Caco-2 (cell line): ENCODE measurements at regions of chrX and their contacts with region 1.

Region 1: DNA sequence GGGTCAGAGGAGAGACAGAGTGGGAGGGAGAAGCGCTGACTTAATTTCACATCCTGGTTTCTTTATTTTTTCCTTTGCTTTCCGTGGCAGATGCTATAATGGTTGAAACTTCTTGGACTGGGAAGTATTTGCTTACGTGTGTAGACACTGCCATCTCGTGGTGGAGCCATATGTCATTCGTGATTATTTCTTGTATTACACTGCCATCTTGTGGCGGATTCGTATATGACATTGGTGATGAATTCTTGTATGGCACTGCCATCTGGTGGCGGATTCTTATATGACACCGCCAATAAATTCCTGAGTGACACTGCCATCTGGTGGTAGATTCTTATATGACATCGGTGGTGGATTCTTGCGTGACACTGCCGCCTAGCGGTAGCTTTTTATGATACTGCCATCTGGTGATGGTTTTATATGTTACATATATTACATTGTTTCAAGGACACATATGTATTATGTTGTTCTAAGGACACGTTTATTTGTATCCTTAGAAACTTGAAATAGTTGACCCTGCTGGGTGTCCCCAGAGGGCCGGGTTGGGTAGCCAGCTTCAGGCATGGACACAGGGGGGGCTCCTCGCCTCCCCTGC is 37.3 kb upstream of the CLCN4 start:
- DNase-seq: peak; percentile 52 to 60
- H3K4me3 ChIP-seq: no peak overlapping the region
- H3K4me3 Mint-ChIP-seq: no peak overlapping the region
- H3K27ac Mint-ChIP-seq: no peak overlapping the region
- H3K4me1 ChIP-seq: no peaks in the 10 kb centered on the region
- H3K4me1 Mint-ChIP-seq: no peaks in the 10 kb centered on the region
- H3K27me3 ChIP-seq: no peaks in the 10 kb centered on the region
- H3K27me3 Mint-ChIP-seq: no peaks in the 10 kb centered on the region
- CTCF ChIP-seq: peak; percentile 92 to 99

Region 2: GRCh38 chrX:9988762-9989161 is 130.7 kb before region 1 on chrX:
- CTCF ChIA-PET with region 1: interaction called, 3 read pairs
- POLR2A ChIA-PET with region 1: no interaction called
- intact Hi-C with region 1: loop called (anchors 1 kb)
- DNase-seq: peak in 1 of 2 experiments; percentile 22
- H3K4me3 ChIP-seq: no peak overlapping the region
- H3K4me3 Mint-ChIP-seq: no peak overlapping the region
- H3K27ac Mint-ChIP-seq: no peak overlapping the region
- H3K4me1 ChIP-seq: no peaks in the 10 kb centered on the region
- H3K4me1 Mint-ChIP-seq: no peaks in the 10 kb centered on the region
- H3K27me3 ChIP-seq: no peaks in the 10 kb centered on the region
- H3K27me3 Mint-ChIP-seq: no peaks in the 10 kb centered on the region
- CTCF ChIP-seq: peak; percentile 23 to 55

Region 3: GRCh38 chrX:9995855-9996339 is 123.6 kb before region 1 on chrX:
- CTCF ChIA-PET with region 1: interaction called, 3 read pairs
- POLR2A ChIA-PET with region 1: no interaction called
- intact Hi-C with region 1: loop called (anchors 1 kb)
- DNase-seq: peak; percentile 74 to 82
- H3K4me3 ChIP-seq: no peak overlapping the region
- H3K4me3 Mint-ChIP-seq: no peak overlapping the region
- H3K27ac Mint-ChIP-seq: no peak overlapping the region
- H3K4me1 ChIP-seq: peaks cover 7% of the 10 kb centered on the region; the same call in 1 of the 2 replicates
- H3K4me1 Mint-ChIP-seq: peaks cover 7% of the 10 kb centered on the region
- H3K27me3 ChIP-seq: no peaks in the 10 kb centered on the region
- H3K27me3 Mint-ChIP-seq: no peaks in the 10 kb centered on the region
- CTCF ChIP-seq: peak; percentile 85 to 87

Region 4: GRCh38 chrX:10014462-10015356 is 104.8 kb before region 1 on chrX:
- CTCF ChIA-PET with region 1: no interaction called
- POLR2A ChIA-PET with region 1: no interaction called
- intact Hi-C with region 1: loop called (anchors 1 kb)
- DNase-seq: peak; percentile 91 to 92
- H3K4me3 ChIP-seq: peak overlapping the region; percentile 58
- H3K4me3 Mint-ChIP-seq: peak overlapping the region; percentile 73
- H3K27ac Mint-ChIP-seq: peak overlapping the region; percentile 65
- H3K4me1 ChIP-seq: peaks cover 10% of the 10 kb centered on the region; the same call in 1 of the 2 replicates
- H3K4me1 Mint-ChIP-seq: peaks cover 30% of the 10 kb centered on the region
- H3K27me3 ChIP-seq: no peaks in the 10 kb centered on the region
- H3K27me3 Mint-ChIP-seq: no peaks in the 10 kb centered on the region
- CTCF ChIP-seq: no peak

Region 5: DNA sequence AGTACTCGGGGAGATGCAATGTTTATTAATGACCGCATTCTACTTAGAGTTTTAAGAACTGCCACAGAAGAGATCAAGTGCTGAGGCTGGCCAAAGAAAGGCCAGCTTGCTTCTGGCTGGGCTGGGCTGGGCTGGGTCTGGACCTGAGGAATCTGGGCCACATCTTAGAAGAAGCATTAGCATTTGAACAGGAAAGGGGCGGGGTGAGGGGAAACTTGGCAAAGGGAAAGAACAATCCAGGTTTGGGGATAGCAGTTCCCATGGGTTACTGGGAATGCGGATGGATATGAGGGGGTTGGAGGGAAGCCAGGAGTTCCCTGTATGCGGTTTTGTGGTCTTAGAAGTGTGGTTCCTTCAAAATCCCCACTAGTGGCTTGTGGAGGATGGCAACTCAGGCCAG is 69.0 kb before region 1 on chrX:
- CTCF ChIA-PET with region 1: no interaction called
- POLR2A ChIA-PET with region 1: no interaction called
- intact Hi-C with region 1: no loop called
- DNase-seq: no peak
- H3K4me3 ChIP-seq: no peak overlapping the region
- H3K4me3 Mint-ChIP-seq: no peak overlapping the region
- H3K27ac Mint-ChIP-seq: no peak overlapping the region
- H3K4me1 ChIP-seq: no peaks in the 10 kb centered on the region
- H3K4me1 Mint-ChIP-seq: no peaks in the 10 kb centered on the region
- H3K27me3 ChIP-seq: no peaks in the 10 kb centered on the region
- H3K27me3 Mint-ChIP-seq: no peaks in the 10 kb centered on the region
- CTCF ChIP-seq: no peak

Region 6: DNA sequence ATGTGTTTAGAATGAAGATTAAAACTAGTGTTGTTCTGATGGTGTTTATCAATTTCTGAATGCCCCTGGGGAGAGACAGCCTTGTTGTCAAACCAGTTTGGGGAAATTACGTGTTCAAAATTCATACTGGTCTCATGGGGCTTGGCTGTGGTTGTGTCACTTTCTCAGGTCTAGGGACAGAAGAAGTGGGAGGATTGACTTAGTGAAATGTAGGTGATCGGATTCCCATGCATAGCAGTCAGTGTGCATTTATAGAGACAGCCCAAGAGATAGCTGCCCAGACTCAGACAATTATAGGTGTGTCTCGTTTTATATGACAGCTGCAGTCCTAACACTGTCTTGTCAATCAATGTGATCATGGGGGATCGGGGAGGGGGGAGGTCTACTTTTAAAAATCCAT is 57.1 kb before region 1 on chrX:
- CTCF ChIA-PET with region 1: no interaction called
- POLR2A ChIA-PET with region 1: no interaction called
- intact Hi-C with region 1: loop called (anchors 2 kb)
- DNase-seq: peak in 1 of 2 experiments; percentile 4
- H3K4me3 ChIP-seq: no peak overlapping the region
- H3K4me3 Mint-ChIP-seq: no peak overlapping the region
- H3K27ac Mint-ChIP-seq: no peak overlapping the region
- H3K4me1 ChIP-seq: peaks cover 10% of the 10 kb centered on the region; the same call in 1 of the 2 replicates
- H3K4me1 Mint-ChIP-seq: peaks cover 9% of the 10 kb centered on the region
- H3K27me3 ChIP-seq: no peaks in the 10 kb centered on the region
- H3K27me3 Mint-ChIP-seq: no peaks in the 10 kb centered on the region
- CTCF ChIP-seq: no peak